ENCODE measurements at regions of chr1 and their contacts with region 1.

Region 1: DNA sequence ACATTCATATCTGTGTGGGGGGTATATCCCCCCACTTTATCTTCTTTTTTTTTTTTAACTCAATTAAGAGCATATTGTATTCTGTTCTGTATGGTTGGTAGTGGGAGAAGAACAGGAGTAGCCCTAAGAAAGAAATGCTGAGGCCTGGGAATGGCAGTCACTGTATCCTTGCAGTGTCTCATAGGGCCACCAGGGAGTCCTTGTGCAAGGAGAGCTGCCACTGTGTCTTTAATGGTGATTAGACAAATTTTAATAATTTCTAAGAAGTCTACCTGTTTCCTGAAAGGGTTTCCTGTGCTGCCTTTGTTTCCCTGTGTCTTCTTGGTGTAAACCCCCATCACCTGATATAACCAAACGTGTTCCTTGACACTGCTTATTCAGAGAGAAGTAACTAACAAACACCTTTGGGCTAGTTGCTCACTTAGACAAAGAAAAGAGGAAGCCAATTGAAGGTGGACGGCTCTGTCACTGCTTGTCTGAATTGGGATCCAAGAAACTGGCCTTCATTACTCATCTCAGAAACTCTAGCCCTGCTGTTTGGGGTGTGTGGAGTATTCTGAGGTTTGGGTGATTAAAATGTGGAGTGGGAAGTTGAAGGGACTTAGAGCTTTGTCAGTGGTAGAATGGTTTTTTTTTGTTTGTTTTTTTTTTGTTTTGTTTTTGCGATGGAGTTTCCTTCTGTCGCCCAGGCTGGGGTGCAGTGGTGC is 15.2 kb downstream of the GIPC2 start:
- DNase-seq: no peak
- H3K4me3 ChIP-seq: no peak overlapping the region
- H3K27ac ChIP-seq: no peak overlapping the region
- H3K4me1 ChIP-seq: no peaks in the 10 kb centered on the region
- H3K27me3 ChIP-seq: no peaks in the 10 kb centered on the region
- CTCF ChIP-seq: no peak
- POLR2A ChIP-seq: no peak

Region 2: DNA sequence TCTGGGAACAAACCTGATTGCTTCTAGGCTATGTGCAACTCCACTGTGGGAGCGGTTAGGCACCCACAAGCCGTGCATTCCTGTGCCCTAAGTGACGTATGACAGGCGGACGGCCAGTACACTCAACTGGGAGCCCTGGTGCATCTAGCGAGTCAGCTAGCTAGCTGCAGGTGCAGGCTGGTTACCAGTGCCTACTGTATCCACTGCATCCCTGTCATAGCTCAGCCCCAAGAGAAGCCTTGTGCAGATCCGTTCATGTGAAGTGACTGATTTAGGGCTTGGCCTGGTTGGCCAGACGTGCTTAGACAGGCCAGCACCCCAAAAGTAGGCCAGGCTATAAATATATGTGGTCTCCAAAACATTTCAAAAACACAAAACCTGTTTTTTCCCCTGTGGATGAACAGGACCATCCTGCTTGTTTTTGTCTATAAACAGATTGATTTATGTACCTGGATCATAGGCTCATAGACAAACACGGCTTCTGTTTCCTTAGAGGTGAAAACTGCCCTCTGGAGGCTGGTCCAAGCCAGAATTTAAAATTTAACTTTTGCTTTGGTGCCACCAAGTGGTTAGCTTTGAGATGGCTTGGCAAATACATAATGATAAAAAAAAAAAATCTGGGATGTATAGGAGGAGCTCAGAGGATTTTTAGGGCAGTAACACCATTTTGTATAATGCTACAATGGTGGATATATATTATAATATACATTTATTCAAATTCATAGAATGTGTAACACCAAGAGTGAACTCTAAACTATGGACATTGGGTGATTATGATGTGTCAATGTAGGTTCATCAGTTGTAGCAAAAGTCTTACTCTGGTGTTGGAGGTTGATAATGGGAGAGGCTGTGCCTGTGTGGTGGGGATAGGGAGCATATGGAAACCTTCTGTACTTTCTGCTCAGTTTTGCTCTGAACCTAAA is 53.3 kb after region 1 on chr1:
- intact Hi-C with region 1: loop called (anchors 10 kb)
- DNase-seq: peak; percentile 67
- H3K4me3 ChIP-seq: no peak overlapping the region
- H3K27ac ChIP-seq: no peak overlapping the region
- H3K4me1 ChIP-seq: no peaks in the 10 kb centered on the region
- H3K27me3 ChIP-seq: no peaks in the 10 kb centered on the region
- CTCF ChIP-seq: peak; percentile 63 to 91 (median 86)
- POLR2A ChIP-seq: no peak

Measured in prostate gland (tissue), 2 donors.